Tibial artery (tissue), 4 donors: ENCODE measurements at regions of chr3 and their contacts with region 1.

Region 1: GRCh38 chr3:108914774-108915641 is 38.7 kb downstream of the GUCA1C start:
- DNase-seq: peak in 1 of 2 donors; percentile 23
- H3K4me3 ChIP-seq: no peak overlapping the region
- H3K27ac ChIP-seq: no peak overlapping the region
- H3K4me1 ChIP-seq: peaks cover 0 to 2% (median 0%) of the 10 kb centered on the region in 4 donors
- H3K27me3 ChIP-seq: peaks cover 0 to 2% of the 10 kb centered on the region in 2 donors
- CTCF ChIP-seq: peak; percentile 53 to 58

Region 2: GRCh38 chr3:107271787-107272387 is 1643.1 kb before region 1 on chr3:
- intact Hi-C with region 1: no loop called
- DNase-seq: no peak
- H3K4me3 ChIP-seq: no peak overlapping the region
- H3K27ac ChIP-seq: no peak overlapping the region
- H3K4me1 ChIP-seq: no peaks in the 10 kb centered on the region
- H3K27me3 ChIP-seq: no peaks in the 10 kb centered on the region
- CTCF ChIP-seq: peak; percentile 57 to 63

Region 3: DNA sequence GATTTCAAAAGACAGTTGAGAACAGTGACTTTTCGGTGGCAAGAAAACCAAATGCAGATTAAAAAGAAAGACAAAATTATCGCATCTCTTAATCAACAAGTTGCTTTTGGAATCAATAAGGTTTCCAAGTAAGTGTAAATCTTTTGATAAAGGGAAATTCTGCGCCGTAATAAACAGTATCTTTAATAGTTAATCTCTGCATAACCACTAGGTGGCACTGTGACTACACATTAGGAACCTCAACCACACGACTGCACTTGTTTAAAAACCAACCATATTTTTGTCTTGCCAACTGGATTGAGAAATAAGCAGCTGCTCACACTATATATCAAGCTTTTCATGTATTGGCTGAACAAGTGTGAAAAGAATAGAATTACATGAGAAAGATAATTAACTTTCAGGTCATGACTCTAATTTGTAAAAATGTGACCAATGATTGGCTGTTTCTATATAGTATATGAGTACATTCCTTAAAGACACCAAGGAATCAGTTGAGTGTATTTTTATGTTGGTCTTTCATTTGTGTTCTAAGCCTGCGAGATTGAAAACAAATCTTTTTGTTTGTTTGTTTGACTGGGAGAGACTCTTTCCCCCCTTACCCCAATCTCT is 252.8 kb before region 1 on chr3:
- intact Hi-C with region 1: loop called (anchors 10 kb)
- DNase-seq: no peak
- H3K4me3 ChIP-seq: no peak overlapping the region
- H3K27ac ChIP-seq: no peak overlapping the region
- H3K4me1 ChIP-seq: no peaks in the 10 kb centered on the region
- H3K27me3 ChIP-seq: no peaks in the 10 kb centered on the region
- CTCF ChIP-seq: peak; percentile 67 to 70